CD4-positive, alpha-beta memory T cell (primary cell): ENCODE measurements at regions of chr11 and their contacts with region 1.

Region 1: DNA sequence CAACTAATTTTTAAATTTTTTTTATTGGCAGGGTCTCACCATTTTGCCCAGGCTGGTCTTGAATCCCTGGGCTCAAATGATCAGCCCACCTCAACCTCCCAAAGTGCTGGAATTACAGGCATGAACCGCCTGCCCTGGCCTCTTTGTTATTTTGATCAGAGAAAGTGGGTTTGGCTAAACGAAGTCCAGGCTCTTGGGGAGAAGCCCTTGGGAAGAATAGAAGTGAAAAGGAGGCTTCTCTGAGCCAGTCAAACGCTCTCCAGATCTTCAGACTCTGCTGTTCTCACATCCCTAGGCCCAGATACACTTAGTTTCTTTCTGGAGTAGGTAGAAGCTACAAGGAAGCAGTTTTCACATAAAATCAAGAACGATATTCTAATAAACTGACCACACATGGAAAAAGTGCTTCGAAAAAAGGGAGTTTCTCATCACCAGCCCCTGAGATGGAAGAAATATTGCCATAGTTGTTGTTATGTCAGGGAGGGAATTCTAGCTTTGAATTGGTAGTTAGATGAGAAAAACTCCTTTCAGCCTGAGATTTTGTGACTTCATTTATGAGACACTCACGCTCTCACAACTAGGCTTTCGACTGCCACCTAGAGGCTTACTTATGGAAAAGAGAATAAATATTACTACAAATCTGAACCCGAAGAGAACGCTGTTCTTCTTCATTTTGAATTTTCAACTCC is 41.7 kb upstream of the AQP11 start:
- DNase-seq: peak in 4 of 5 donors; percentile 35 to 44 (median 38)
- H3K4me3 ChIP-seq: no peak overlapping the region
- H3K4me3 Mint-ChIP-seq: peak overlapping the region in 2 of 8 donors; percentile 13 to 30
- H3K27ac ChIP-seq: no peak overlapping the region
- H3K27ac Mint-ChIP-seq: peak overlapping the region in 2 of 7 donors; percentile 24 to 47
- H3K4me1 ChIP-seq: no peaks in the 10 kb centered on the region
- H3K4me1 Mint-ChIP-seq: peaks cover 1 to 9% (median 6%) of the 10 kb centered on the region in 4 donors
- H3K27me3 ChIP-seq: no peaks in the 10 kb centered on the region
- H3K27me3 Mint-ChIP-seq: no peaks in the 10 kb centered on the region

Region 2: GRCh38 chr11:77047007-77047927 is 500.7 kb before region 1 on chr11:
- CTCF ChIA-PET with region 1: interaction called, 4 read pairs
- POLR2A ChIA-PET with region 1: no interaction called
- intact Hi-C with region 1: loop called (anchors 2 kb)
- DNase-seq: peak; percentile 90 to 94 (median 93)
- H3K4me3 ChIP-seq: peak overlapping the region; percentile 33 to 59
- H3K4me3 Mint-ChIP-seq: peak overlapping the region; percentile 67 to 83 (median 72)
- H3K27ac ChIP-seq: peak overlapping the region; percentile 61
- H3K27ac Mint-ChIP-seq: peak overlapping the region; percentile 24 to 92 (median 60)
- H3K4me1 ChIP-seq: peaks cover 16% of the 10 kb centered on the region
- H3K4me1 Mint-ChIP-seq: peaks cover 5 to 11% (median 6%) of the 10 kb centered on the region in 4 donors
- H3K27me3 ChIP-seq: no peaks in the 10 kb centered on the region
- H3K27me3 Mint-ChIP-seq: peaks cover 2 to 3% of the 10 kb centered on the region in 2 donors

Region 3: DNA sequence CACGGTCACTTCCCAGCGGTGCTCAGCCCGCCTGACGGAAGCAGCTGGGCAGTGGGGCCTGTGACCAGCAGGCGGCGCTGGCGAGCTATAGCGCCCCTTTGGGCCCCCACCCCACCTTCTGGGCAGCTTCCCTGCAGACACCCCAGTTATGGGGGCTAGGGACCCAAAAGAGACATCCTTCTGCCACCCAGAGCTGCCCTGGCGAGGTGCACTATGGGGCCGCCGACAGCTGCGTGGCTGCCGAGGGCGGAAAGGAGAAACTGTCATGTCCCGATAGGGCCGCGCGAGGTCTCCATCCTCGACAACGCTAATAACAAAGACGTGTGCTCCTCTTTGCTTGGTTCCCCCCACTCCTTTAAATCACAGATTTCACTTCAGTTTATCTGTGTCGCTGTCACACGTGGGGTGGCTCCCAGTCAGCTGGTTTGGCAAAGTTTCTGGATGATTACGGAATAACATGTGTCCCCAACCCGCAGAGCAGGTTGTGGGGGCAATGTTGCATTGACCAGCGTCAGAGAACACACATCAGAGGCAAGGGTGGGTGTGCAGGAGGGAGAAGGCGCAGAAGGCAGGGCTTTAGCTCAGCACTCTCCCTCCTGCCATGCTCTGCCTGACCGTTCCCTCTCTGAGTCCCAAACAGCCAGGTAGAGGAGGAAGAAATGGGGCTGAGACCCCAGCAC is 420.6 kb before region 1 on chr11:
- CTCF ChIA-PET with region 1: interaction called, 25 read pairs
- POLR2A ChIA-PET with region 1: no interaction called
- intact Hi-C with region 1: no loop called
- DNase-seq: peak in 4 of 5 donors; percentile 46 to 66 (median 54)
- H3K4me3 ChIP-seq: peak overlapping the region; percentile 20 to 62
- H3K4me3 Mint-ChIP-seq: peak overlapping the region; percentile 48 to 80 (median 73)
- H3K27ac ChIP-seq: no peak overlapping the region
- H3K27ac Mint-ChIP-seq: peak overlapping the region in 3 of 7 donors; percentile 52 to 83 (median 56)
- H3K4me1 ChIP-seq: peaks cover 14% of the 10 kb centered on the region
- H3K4me1 Mint-ChIP-seq: peaks cover 3 to 17% (median 8%) of the 10 kb centered on the region in 4 donors
- H3K27me3 ChIP-seq: no peaks in the 10 kb centered on the region
- H3K27me3 Mint-ChIP-seq: no peaks in the 10 kb centered on the region

Region 4: GRCh38 chr11:77187776-77188632 is 360.0 kb before region 1 on chr11:
- CTCF ChIA-PET with region 1: interaction called, 6 read pairs
- POLR2A ChIA-PET with region 1: no interaction called
- intact Hi-C with region 1: loop called (anchors 1 kb)
- DNase-seq: peak in 4 of 5 donors; percentile 45 to 57 (median 54)
- H3K4me3 ChIP-seq: no peak overlapping the region
- H3K4me3 Mint-ChIP-seq: no peak overlapping the region
- H3K27ac ChIP-seq: no peak overlapping the region
- H3K27ac Mint-ChIP-seq: peak overlapping the region in 2 of 7 donors; percentile 0 to 21
- H3K4me1 ChIP-seq: peaks cover 6% of the 10 kb centered on the region
- H3K4me1 Mint-ChIP-seq: peaks cover 0 to 10% (median 4%) of the 10 kb centered on the region in 4 donors
- H3K27me3 ChIP-seq: no peaks in the 10 kb centered on the region
- H3K27me3 Mint-ChIP-seq: no peaks in the 10 kb centered on the region

Region 5: DNA sequence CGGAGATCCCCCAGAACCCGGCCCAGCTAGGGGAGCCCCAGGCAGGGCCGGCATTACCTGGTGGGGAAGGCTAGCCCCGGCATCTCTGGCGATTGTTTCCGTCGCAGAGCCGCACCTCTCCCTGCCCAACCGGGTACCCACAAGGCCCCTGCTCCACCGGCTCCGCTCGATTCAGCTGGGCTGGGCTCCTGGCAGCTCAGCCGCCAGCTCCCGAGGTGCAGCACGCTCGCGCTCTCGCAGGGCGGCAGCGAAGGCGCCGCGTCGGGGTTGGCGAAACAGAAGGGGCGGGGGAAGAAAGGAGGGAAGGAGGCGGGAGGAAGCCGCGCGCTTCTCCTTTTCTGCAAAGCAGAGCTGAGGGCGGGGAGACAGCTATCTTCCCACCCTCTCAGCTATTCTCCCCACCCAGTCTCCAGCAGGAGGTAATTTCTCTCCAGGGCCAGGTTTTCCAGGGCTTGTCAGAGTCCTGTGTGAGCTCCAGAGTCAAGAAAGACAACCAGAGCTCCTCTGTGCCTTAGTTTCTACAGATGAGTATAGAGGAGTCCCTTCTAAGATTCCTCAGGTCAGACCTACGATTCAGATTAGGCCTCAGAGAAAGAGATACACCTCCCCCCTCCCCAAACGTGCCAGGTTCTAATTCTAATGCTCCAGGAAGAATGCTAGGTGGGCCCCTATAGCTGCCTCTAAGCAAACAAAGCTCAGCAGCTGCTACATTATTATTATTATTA is 136.1 kb before region 1 on chr11:
- CTCF ChIA-PET with region 1: interaction called, 4 read pairs
- POLR2A ChIA-PET with region 1: no interaction called
- intact Hi-C with region 1: loop called (anchors 1 kb)
- DNase-seq: peak; percentile 73 to 78 (median 75)
- H3K4me3 ChIP-seq: peak overlapping the region; percentile 30 to 89
- H3K4me3 Mint-ChIP-seq: peak overlapping the region; percentile 82 to 97 (median 92)
- H3K27ac ChIP-seq: peak overlapping the region; percentile 48
- H3K27ac Mint-ChIP-seq: peak overlapping the region; percentile 65 to 93 (median 86)
- H3K4me1 ChIP-seq: peaks cover 19% of the 10 kb centered on the region
- H3K4me1 Mint-ChIP-seq: peaks cover 23 to 35% (median 29%) of the 10 kb centered on the region in 4 donors
- H3K27me3 ChIP-seq: no peaks in the 10 kb centered on the region
- H3K27me3 Mint-ChIP-seq: no peaks in the 10 kb centered on the region

Region 6: DNA sequence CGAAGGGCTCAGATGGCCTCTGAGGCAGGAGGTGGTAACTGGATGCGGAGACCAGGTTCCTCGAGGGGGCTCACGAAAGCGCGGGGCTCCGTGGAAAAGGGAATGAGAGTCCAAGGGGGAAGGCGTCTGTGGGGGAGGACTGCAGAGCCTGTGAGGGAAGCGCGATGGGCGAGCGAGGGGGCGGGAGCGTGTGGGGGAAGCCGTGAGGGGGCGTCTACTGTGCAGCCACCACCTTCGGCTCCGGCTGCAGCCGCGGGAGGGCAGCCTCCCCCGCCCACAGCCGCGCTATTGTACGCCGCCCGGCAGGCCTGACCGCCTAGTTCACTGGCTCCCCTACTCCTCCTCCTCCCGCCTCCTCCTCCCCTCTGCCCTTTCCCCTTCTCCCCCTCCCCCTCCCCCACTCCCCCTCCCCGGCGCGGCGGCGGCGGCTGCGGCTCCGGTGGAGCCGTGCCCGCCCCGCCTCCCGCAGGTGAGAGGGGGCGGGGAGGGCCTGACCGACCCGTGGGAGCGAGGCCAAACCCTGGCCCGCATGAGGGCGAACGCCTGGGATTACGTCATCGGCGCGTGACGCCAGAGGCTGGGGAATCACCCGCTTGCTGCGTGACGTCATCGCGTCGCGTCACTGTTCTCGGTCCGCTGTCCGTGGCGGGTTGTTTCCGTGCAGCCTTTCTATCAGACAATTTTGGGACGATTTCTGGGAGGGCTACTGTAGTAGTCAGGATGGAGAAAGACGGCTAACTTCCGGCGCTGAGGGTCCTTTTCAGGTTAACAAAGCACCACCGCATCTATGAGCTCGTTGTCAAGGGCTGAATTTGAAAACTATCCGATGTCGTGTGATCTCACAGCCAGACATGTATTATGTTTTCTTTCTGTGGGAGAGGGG is 74.0 kb before region 1 on chr11 and contains the start of gene PAK1:
- CTCF ChIA-PET with region 1: interaction called, 5 read pairs
- POLR2A ChIA-PET with region 1: no interaction called
- intact Hi-C with region 1: loop called (anchors 5 kb)
- DNase-seq: peak; percentile 87 to 96 (median 89)
- H3K4me3 ChIP-seq: peak within 1 kb of the TSS; percentile 42 to 49
- H3K4me3 Mint-ChIP-seq: peak within 1 kb of the TSS; percentile 87 to 97 (median 92)
- H3K27ac ChIP-seq: peak within 1 kb of the TSS; percentile 49
- H3K27ac Mint-ChIP-seq: peak within 1 kb of the TSS; percentile 96 to 100 (median 99)
- H3K4me1 ChIP-seq: peaks cover 11% of the 10 kb centered on the region
- H3K4me1 Mint-ChIP-seq: peaks cover 7 to 14% (median 12%) of the 10 kb centered on the region in 4 donors
- H3K27me3 ChIP-seq: no peaks in the 10 kb centered on the region
- H3K27me3 Mint-ChIP-seq: peaks cover 3 to 11% of the 10 kb centered on the region in 2 donors
- total RNA-seq, gene PAK1: 9.8 to 10.4 TPM

Region 7: GRCh38 chr11:77672264-77672663 is 124.3 kb after region 1 on chr11:
- CTCF ChIA-PET with region 1: no interaction called
- POLR2A ChIA-PET with region 1: no interaction called
- intact Hi-C with region 1: no loop called
- DNase-seq: no peak
- H3K4me3 ChIP-seq: no peak overlapping the region
- H3K4me3 Mint-ChIP-seq: no peak overlapping the region
- H3K27ac ChIP-seq: no peak overlapping the region
- H3K27ac Mint-ChIP-seq: peak overlapping the region in 1 of 7 donors; percentile 69
- H3K4me1 ChIP-seq: no peaks in the 10 kb centered on the region
- H3K4me1 Mint-ChIP-seq: peaks cover 0 to 4% (median 2%) of the 10 kb centered on the region in 4 donors
- H3K27me3 ChIP-seq: no peaks in the 10 kb centered on the region
- H3K27me3 Mint-ChIP-seq: no peaks in the 10 kb centered on the region